Activated B cell treated with CpG ODN at 0.5 μM for 24 hours (primary cell): ENCODE measurements at regions of chr2 and their contacts with region 1.

Region 1: DNA sequence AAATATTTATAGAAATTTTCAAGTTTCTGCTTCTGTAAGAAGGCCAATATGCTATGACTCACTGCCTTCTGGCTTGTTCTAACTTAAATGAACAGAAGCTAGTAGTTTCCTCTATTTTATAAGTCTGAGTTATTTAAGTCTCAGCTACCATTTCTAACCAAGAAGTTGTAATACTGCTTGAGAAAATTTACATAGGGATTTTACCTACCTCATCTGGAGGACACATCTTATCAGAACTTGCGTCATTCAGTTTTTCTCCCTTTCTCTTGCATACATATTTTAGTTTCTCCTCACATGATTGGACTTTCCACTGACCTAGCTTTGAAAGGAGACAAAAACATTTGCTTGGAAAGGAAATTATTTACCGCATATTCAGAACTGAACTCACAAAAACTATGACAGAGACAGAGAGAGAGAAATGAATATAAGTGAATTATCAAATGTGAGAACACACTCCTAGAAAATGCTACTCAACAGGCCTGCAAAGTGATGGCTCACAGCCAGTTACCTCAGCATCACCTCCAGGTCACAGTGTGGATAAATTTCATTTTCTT is 81.1 kb upstream of the CD302 start:
- DNase-seq: no peak
- ATAC-seq: peak; percentile 88
- H3K4me3 Mint-ChIP-seq: peak overlapping the region; percentile 46
- H3K27ac Mint-ChIP-seq: peak overlapping the region; percentile 91
- H3K4me1 Mint-ChIP-seq: peaks cover 45% of the 10 kb centered on the region
- H3K27me3 Mint-ChIP-seq: no peaks in the 10 kb centered on the region
- CTCF ChIP-seq: no peak

Region 2: GRCh38 chr2:159286709-159287441 is 592.3 kb before region 1 on chr2:
- CTCF ChIA-PET with region 1: no interaction called
- POLR2A ChIA-PET with region 1: no interaction called
- intact Hi-C with region 1: loop called (anchors 10 kb)
- DNase-seq: peak; percentile 97
- ATAC-seq: peak; percentile 99
- H3K4me3 Mint-ChIP-seq: peak overlapping the region; percentile 93
- H3K27ac Mint-ChIP-seq: peak overlapping the region; percentile 84
- H3K4me1 Mint-ChIP-seq: peaks cover 41% of the 10 kb centered on the region
- H3K27me3 Mint-ChIP-seq: peaks cover 2% of the 10 kb centered on the region
- CTCF ChIP-seq: no peak

Region 3: GRCh38 chr2:159895258-159896065 is 16.3 kb after region 1 on chr2:
- CTCF ChIA-PET with region 1: interaction called, 3 read pairs
- POLR2A ChIA-PET with region 1: interaction called, 34 read pairs
- intact Hi-C with region 1: loop called (anchors 1 kb)
- DNase-seq: no peak
- ATAC-seq: peak; percentile 82
- H3K4me3 Mint-ChIP-seq: peak overlapping the region; percentile 55
- H3K27ac Mint-ChIP-seq: peak overlapping the region; percentile 76
- H3K4me1 Mint-ChIP-seq: peaks cover 97% of the 10 kb centered on the region
- H3K27me3 Mint-ChIP-seq: no peaks in the 10 kb centered on the region
- CTCF ChIP-seq: no peak

Region 4: GRCh38 chr2:159921752-159922404 is 42.8 kb after region 1 on chr2:
- CTCF ChIA-PET with region 1: interaction called, 6 read pairs
- POLR2A ChIA-PET with region 1: interaction called, 5 read pairs
- intact Hi-C with region 1: loop called (anchors 1 kb)
- DNase-seq: peak; percentile 65
- ATAC-seq: peak; percentile 97
- H3K4me3 Mint-ChIP-seq: no peak overlapping the region
- H3K27ac Mint-ChIP-seq: peak overlapping the region; percentile 6
- H3K4me1 Mint-ChIP-seq: peaks cover 28% of the 10 kb centered on the region
- H3K27me3 Mint-ChIP-seq: no peaks in the 10 kb centered on the region
- CTCF ChIP-seq: no peak

Region 5: DNA sequence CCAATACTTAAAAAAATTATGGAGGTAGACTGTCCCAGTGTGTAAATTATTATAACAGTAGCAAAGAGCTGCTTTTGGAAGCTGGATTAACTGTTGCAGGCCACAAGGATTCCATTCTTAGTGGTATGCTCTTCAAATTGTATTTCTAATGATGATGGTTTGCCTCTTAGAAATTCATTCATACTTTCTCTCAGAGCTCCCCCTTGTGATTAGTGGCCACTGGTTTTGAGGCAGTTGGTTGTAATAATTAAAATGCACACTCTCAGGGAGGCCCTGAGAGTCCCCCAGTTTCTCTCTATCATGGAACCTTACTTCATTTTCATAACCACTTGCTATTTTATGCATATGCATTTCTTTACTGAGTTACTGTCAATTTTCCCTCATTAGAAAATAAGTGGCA is 60.8 kb after region 1 on chr2:
- CTCF ChIA-PET with region 1: interaction called, 4 read pairs
- POLR2A ChIA-PET with region 1: interaction called, 3 read pairs
- intact Hi-C with region 1: loop called (anchors 1 kb)
- DNase-seq: no peak
- ATAC-seq: peak; percentile 54
- H3K4me3 Mint-ChIP-seq: no peak overlapping the region
- H3K27ac Mint-ChIP-seq: no peak overlapping the region
- H3K4me1 Mint-ChIP-seq: peaks cover 8% of the 10 kb centered on the region
- H3K27me3 Mint-ChIP-seq: no peaks in the 10 kb centered on the region
- CTCF ChIP-seq: no peak

Region 6: GRCh38 chr2:160210599-160211138 is 331.5 kb after region 1 on chr2:
- CTCF ChIA-PET with region 1: no interaction called
- POLR2A ChIA-PET with region 1: no interaction called
- intact Hi-C with region 1: loop called (anchors 10 kb)
- DNase-seq: peak; percentile 60
- ATAC-seq: peak; percentile 99
- H3K4me3 Mint-ChIP-seq: no peak overlapping the region
- H3K27ac Mint-ChIP-seq: no peak overlapping the region
- H3K4me1 Mint-ChIP-seq: peaks cover 31% of the 10 kb centered on the region
- H3K27me3 Mint-ChIP-seq: peaks cover 9% of the 10 kb centered on the region
- CTCF ChIP-seq: peak; percentile 85